ENCODE measurements at regions of chr3 and their contacts with region 1.

Region 1: DNA sequence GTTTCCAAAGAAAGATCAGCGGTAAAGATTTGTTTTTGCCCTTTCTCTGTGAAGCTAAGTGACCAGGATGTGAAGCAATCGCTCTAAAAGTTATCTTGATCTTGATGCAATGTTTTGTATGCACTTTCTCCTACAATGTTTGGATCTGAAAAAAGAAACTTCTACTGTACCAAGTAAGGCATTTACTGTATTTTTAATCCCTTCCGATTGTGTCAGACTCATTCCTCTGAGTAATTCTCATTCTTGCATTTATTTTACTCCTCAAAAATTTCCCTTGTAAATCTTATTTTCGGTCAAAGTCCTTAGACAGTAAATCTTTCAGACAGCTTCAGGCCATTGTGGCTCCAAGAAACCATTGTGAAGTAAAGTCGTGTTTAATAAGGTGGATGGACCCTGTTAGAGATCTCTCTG is 141.9 kb downstream of the TP63 start:
- DNase-seq: no peak
- ATAC-seq: no peak
- H3K4me3 ChIP-seq: no peak overlapping the region
- H3K27ac ChIP-seq: peak overlapping the region in 2 of 4 donors; percentile 2 to 5
- H3K4me1 ChIP-seq: peaks cover 13 to 14% of the 10 kb centered on the region in 2 donors
- H3K27me3 ChIP-seq: no peaks in the 10 kb centered on the region
- CTCF ChIP-seq: no peak
- POLR2A ChIP-seq: no peak

Region 2: GRCh38 chr3:189724356-189724755 is 48.7 kb before region 1 on chr3:
- in situ Hi-C with region 1: no loop called
- intact Hi-C with region 1: loop called (anchors 5 kb)
- DNase-seq: no peak
- ATAC-seq: no peak
- H3K4me3 ChIP-seq: no peak overlapping the region
- H3K27ac ChIP-seq: no peak overlapping the region
- H3K4me1 ChIP-seq: peaks cover 10 to 33% of the 10 kb centered on the region in 2 donors
- H3K27me3 ChIP-seq: no peaks in the 10 kb centered on the region
- CTCF ChIP-seq: no peak
- POLR2A ChIP-seq: no peak

Region 3: GRCh38 chr3:189756220-189757078 is 16.6 kb before region 1 on chr3:
- in situ Hi-C with region 1: no loop called
- intact Hi-C with region 1: no loop called
- DNase-seq: no peak
- ATAC-seq: peak in 1 of 2 donors; percentile 55
- H3K4me3 ChIP-seq: no peak overlapping the region
- H3K27ac ChIP-seq: no peak overlapping the region
- H3K4me1 ChIP-seq: peaks cover 9 to 33% of the 10 kb centered on the region in 2 donors
- H3K27me3 ChIP-seq: no peaks in the 10 kb centered on the region
- CTCF ChIP-seq: no peak
- POLR2A ChIP-seq: no peak

Region 4: GRCh38 chr3:189871418-189871817 is 98.4 kb after region 1 on chr3:
- in situ Hi-C with region 1: no loop called
- intact Hi-C with region 1: no loop called
- DNase-seq: no peak
- ATAC-seq: no peak
- H3K4me3 ChIP-seq: no peak overlapping the region
- H3K27ac ChIP-seq: no peak overlapping the region
- H3K4me1 ChIP-seq: no peaks in the 10 kb centered on the region
- H3K27me3 ChIP-seq: no peaks in the 10 kb centered on the region
- CTCF ChIP-seq: no peak
- POLR2A ChIP-seq: no peak

Measured in gastrocnemius medialis (tissue), 4 donors.